ENCODE measurements at regions of chrX and their contacts with region 1.

Region 1: GRCh38 chrX:48801280-48802088 is at the start of gene HDAC6:
- DNase-seq: peak; percentile 90 to 97
- ATAC-seq: peak; percentile 80 to 94 (median 81)
- H3K4me3 ChIP-seq: peak within 1 kb of the TSS; percentile 91
- H3K4me3 Mint-ChIP-seq: peak within 1 kb of the TSS; percentile 96
- H3K27ac ChIP-seq: peak within 1 kb of the TSS; percentile 100
- H3K27ac Mint-ChIP-seq: peak within 1 kb of the TSS; percentile 97 to 98
- H3K4me1 ChIP-seq: peaks cover 16% of the 10 kb centered on the region
- H3K4me1 Mint-ChIP-seq: peaks cover 0 to 21% of the 10 kb centered on the region in 2 donors
- H3K27me3 ChIP-seq: no peaks in the 10 kb centered on the region
- H3K27me3 Mint-ChIP-seq: peaks cover 0 to 6% of the 10 kb centered on the region in 2 donors
- CTCF ChIP-seq: no peak
- total RNA-seq, gene HDAC6: 97.4 to 118 (median 101) TPM

Region 2: DNA sequence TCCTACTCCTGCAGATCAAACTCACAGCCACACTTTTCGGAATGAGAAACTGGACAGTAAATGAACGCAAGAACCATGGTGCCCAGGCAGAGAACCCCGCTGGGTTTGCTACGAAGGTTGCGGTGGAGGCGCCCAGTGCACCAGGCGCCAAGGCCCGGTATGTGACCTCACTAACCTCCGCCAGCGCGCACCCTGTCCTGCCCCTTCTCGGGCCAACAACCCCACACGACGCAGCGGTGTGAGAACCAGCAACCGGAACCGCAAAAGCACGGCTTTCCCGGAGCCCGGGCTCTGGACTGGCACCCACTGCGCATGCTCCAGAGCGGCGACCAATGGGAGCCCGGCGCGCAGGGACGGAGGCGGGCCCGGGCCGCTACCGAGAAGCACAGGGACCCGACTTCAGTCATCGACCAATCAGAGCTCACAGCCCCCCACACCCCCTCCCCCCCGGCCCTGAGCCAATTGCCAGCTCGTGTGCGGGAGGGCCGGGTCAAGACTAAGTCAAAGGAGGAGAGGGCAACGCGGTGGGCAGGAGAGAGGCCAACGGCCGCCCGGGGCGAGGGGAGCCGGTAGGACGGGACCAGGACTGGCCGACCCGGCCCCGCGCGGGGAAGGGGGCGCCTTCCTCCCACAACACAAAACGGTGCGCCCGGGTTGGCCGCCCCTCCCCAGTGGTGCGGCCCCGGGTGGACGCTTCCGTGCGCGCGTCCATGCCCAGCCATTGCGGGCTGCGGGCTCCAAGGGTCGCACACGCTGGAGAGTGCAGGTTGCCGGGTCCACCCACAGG is 125.2 kb before region 1 on chrX:
- intact Hi-C with region 1: loop called (anchors 2 kb)
- DNase-seq: peak; percentile 85 to 93
- ATAC-seq: peak; percentile 95 to 98 (median 96)
- H3K4me3 ChIP-seq: peak overlapping the region; percentile 80
- H3K4me3 Mint-ChIP-seq: peak overlapping the region; percentile 87
- H3K27ac ChIP-seq: peak overlapping the region; percentile 95
- H3K27ac Mint-ChIP-seq: peak overlapping the region; percentile 87 to 92
- H3K4me1 ChIP-seq: peaks cover 18% of the 10 kb centered on the region
- H3K4me1 Mint-ChIP-seq: peaks cover 4 to 15% of the 10 kb centered on the region in 2 donors
- H3K27me3 ChIP-seq: no peaks in the 10 kb centered on the region
- H3K27me3 Mint-ChIP-seq: no peaks in the 10 kb centered on the region
- CTCF ChIP-seq: no peak

Region 3: GRCh38 chrX:48737213-48737938 is 64.1 kb before region 1 on chrX:
- intact Hi-C with region 1: loop called (anchors 1 kb)
- DNase-seq: peak; percentile 72 to 96
- ATAC-seq: peak; percentile 95 to 99 (median 98)
- H3K4me3 ChIP-seq: peak overlapping the region; percentile 56
- H3K4me3 Mint-ChIP-seq: peak overlapping the region; percentile 82
- H3K27ac ChIP-seq: peak overlapping the region; percentile 86
- H3K27ac Mint-ChIP-seq: peak overlapping the region; percentile 90 to 96
- H3K4me1 ChIP-seq: peaks cover 18% of the 10 kb centered on the region
- H3K4me1 Mint-ChIP-seq: peaks cover 6 to 20% of the 10 kb centered on the region in 2 donors
- H3K27me3 ChIP-seq: no peaks in the 10 kb centered on the region
- H3K27me3 Mint-ChIP-seq: no peaks in the 10 kb centered on the region
- CTCF ChIP-seq: no peak

Measured in natural killer cell (primary cell).